ENCODE measurements at regions of chr5 and their contacts with region 1.

Region 1: GRCh38 chr5:88883059-88883835 is at the start of gene MEF2C:
- DNase-seq: no peak
- H3K4me3 Mint-ChIP-seq: peak within 1 kb of the TSS; percentile 87
- H3K27ac Mint-ChIP-seq: no peak within 1 kb of the TSS
- H3K4me1 Mint-ChIP-seq: peaks cover 21% of the 10 kb centered on the region
- H3K27me3 Mint-ChIP-seq: peaks cover 59% of the 10 kb centered on the region
- total RNA-seq, gene MEF2C: 0.44 and 0.47 TPM in 2 replicates

Region 2: GRCh38 chr5:88660947-88661805 is 222.1 kb before region 1 on chr5:
- intact Hi-C with region 1: loop called (anchors 2 kb)
- DNase-seq: no peak
- H3K4me3 Mint-ChIP-seq: peak overlapping the region; percentile 65
- H3K27ac Mint-ChIP-seq: peak overlapping the region; percentile 61
- H3K4me1 Mint-ChIP-seq: peaks cover 23% of the 10 kb centered on the region
- H3K27me3 Mint-ChIP-seq: peaks cover 71% of the 10 kb centered on the region

Region 3: DNA sequence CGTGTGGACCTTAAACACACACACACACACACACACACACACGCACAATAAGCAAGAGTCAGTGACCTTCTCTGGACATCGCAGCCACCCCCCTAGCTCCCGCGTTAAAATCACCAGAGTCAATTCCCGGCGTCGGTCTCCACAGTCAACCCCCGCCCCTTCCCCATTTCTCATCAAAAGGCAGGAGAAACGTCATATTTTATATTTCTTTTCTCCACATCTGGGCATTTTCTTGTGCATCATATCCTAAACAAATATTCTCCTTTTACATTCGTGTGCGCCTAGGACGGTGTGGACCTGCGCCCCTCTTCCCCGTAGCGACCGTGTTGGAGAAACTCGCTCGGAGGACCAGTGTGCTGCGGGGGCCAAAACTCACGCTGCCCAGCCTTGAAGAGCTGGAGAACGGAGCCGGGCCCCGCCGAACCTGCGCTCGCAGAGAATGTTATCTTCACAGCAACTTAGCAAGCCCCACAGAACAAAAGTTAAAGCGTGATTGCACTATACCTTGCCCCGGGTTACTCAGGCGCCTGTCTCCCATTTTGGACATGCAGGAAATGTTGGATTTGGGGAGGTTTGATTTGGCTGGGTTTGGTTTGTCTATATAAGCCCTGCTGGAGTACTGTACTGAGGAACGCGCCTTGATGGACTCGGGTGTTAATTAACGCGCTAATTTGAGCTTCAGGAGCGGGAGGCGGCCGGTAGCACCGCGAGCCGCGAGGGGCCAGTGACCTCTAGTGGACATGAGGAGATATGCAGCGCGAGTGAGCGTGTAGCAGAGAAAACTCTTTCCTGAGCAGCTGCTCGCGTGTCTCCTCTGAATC is 192.6 kb before region 1 on chr5:
- intact Hi-C with region 1: loop called (anchors 2 kb)
- DNase-seq: peak; percentile 60
- H3K4me3 Mint-ChIP-seq: peak overlapping the region; percentile 62
- H3K27ac Mint-ChIP-seq: peak overlapping the region; percentile 92
- H3K4me1 Mint-ChIP-seq: peaks cover 21% of the 10 kb centered on the region
- H3K27me3 Mint-ChIP-seq: peaks cover 87% of the 10 kb centered on the region

Region 4: GRCh38 chr5:88826646-88827585 is 56.3 kb before region 1 on chr5:
- intact Hi-C with region 1: loop called (anchors 5 kb)
- DNase-seq: no peak
- H3K4me3 Mint-ChIP-seq: peak overlapping the region; percentile 28
- H3K27ac Mint-ChIP-seq: peak overlapping the region; percentile 80
- H3K4me1 Mint-ChIP-seq: peaks cover 44% of the 10 kb centered on the region
- H3K27me3 Mint-ChIP-seq: peaks cover 3% of the 10 kb centered on the region